Heart right ventricle (tissue), 16 donors: ENCODE measurements at regions of chr4 and their contacts with region 1.

Region 1: DNA sequence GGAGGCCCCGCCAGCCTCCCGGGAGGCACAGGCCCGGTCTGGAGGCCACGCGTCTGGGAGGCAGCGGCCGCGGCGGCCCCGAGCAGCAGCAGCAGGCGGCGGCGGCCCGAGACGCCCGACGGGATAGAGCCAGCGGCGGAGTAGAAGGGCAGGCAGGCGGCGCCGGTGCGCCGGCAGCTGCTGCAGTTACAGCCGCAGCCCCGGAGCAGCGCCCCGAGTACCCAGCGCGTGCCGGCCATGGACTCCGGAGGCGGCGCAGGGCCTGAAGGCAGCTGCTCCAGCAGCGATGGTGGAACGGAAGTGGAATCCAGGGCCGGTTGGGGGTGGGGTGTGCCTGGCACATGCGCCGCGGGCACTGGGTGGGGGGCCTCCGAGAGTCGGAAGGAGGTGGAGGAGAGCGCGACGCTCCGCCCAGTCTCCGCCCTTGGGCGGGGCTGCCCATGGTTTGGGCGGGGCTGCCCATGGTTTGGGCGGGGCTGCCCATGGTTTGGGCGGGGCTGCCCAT is at the start of gene GRSF1:
- DNase-seq: peak; percentile 94 to 96
- ATAC-seq: peak; percentile 96 to 98 (median 97)
- H3K4me3 ChIP-seq: peak within 1 kb of the TSS; percentile 59 to 95 (median 88)
- H3K27ac ChIP-seq: peak within 1 kb of the TSS; percentile 81 to 99 (median 96)
- H3K4me1 ChIP-seq: peaks cover 3 to 32% (median 27%) of the 10 kb centered on the region in 9 donors
- H3K27me3 ChIP-seq: no peaks in the 10 kb centered on the region
- CTCF ChIP-seq: peak in 5 of 9 donors; percentile 17 to 48 (median 36)
- total RNA-seq, gene GRSF1: 85.1 to 131 (median 101) TPM

Region 2: GRCh38 chr4:70603856-70604255 is 235.8 kb before region 1 on chr4:
- intact Hi-C with region 1: no loop called
- DNase-seq: no peak
- ATAC-seq: no peak
- H3K4me3 ChIP-seq: no peak overlapping the region
- H3K27ac ChIP-seq: no peak overlapping the region
- H3K4me1 ChIP-seq: no peaks in the 10 kb centered on the region
- H3K27me3 ChIP-seq: peaks cover 0 to 8% (median 0%) of the 10 kb centered on the region in 7 donors
- CTCF ChIP-seq: no peak

Region 3: GRCh38 chr4:70687821-70688794 is 151.5 kb before region 1 on chr4 and contains the start of gene UTP3:
- intact Hi-C with region 1: loop called in 2 of 10 experiments (anchors 2 to 10 kb)
- DNase-seq: peak; percentile 95 to 97
- ATAC-seq: peak; percentile 97 to 99 (median 98)
- H3K4me3 ChIP-seq: peak within 1 kb of the TSS; percentile 65 to 96 (median 92)
- H3K27ac ChIP-seq: peak within 1 kb of the TSS; percentile 78 to 98 (median 94)
- H3K4me1 ChIP-seq: peaks cover 8 to 50% (median 33%) of the 10 kb centered on the region in 9 donors
- H3K27me3 ChIP-seq: no peaks in the 10 kb centered on the region
- CTCF ChIP-seq: peak; percentile 93 to 99 (median 98)
- total RNA-seq, gene UTP3: 13.9 to 20.4 (median 18.5) TPM

Region 4: DNA sequence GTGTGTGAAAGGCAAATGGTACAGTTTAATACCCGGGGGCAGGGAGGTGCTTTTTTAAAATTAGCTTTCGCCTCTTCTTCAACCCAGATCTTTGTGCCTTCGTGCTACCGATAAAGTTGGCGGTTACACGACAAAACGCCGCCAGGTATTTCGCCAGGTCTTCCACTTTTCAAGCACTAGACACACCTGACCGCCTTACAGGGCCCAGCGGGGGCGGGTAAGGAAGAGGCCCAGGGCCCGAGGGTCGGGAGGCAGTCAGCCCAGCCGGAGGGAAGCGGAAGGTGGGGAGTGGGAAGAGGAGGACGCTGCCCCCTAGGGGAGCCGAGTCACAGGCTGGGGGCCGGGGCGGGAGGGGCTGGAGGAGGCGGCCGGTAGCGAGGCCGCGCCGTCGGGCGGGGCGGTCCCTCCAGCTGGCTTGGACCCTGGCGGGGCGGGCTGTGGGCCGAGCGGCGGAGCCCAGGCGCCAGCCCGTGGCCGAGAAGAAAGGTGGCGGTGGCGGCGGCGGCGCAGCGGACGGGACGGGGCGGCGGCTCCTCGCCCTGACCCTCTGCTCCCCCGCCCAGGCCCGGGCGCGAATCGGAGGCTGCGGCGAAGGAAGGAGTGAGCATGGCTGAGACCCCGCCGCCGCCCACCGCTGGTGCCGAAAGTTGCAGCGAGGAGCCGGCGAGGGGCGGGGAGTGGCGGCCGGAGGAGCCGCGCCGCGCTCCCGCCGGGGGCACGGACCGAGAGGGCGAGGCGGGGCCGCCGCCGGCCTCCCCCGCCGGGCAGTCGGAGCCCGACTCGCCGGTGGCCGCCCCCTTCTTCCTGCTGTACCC is 135.1 kb before region 1 on chr4:
- intact Hi-C with region 1: loop called in 3 of 10 experiments (anchors 10 kb)
- DNase-seq: peak; percentile 86 to 87
- ATAC-seq: peak; percentile 87 to 93 (median 90)
- H3K4me3 ChIP-seq: peak overlapping the region; percentile 59 to 96 (median 84)
- H3K27ac ChIP-seq: peak overlapping the region; percentile 77 to 99 (median 97)
- H3K4me1 ChIP-seq: peaks cover 3 to 33% (median 17%) of the 10 kb centered on the region in 9 donors
- H3K27me3 ChIP-seq: no peaks in the 10 kb centered on the region
- CTCF ChIP-seq: peak in 8 of 9 donors; percentile 8 to 66 (median 38)

Region 5: DNA sequence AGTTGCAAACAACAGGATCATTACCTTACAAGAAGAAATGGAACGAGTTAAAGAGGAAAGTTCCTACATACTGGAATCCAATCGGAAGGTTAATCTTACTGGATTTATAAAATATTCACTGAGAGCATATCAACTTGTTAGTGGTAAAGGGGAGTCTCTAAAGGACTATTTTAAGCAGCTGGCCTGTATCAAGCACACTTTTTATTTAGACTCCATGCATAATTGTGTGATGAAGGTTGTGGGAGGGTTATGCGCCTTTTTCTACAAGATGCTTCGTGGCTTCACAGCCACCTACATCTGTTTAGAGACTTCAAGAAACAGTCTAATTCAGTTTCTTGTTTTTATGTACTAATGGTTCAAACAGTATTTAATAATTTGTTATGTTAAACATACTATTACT is 56.5 kb before region 1 on chr4:
- intact Hi-C with region 1: loop called in 1 of 10 experiments (anchors 10 kb)
- DNase-seq: no peak
- ATAC-seq: no peak
- H3K4me3 ChIP-seq: no peak overlapping the region
- H3K27ac ChIP-seq: no peak overlapping the region
- H3K4me1 ChIP-seq: peaks cover 0 to 13% (median 0%) of the 10 kb centered on the region in 9 donors
- H3K27me3 ChIP-seq: no peaks in the 10 kb centered on the region
- CTCF ChIP-seq: no peak

Region 6: DNA sequence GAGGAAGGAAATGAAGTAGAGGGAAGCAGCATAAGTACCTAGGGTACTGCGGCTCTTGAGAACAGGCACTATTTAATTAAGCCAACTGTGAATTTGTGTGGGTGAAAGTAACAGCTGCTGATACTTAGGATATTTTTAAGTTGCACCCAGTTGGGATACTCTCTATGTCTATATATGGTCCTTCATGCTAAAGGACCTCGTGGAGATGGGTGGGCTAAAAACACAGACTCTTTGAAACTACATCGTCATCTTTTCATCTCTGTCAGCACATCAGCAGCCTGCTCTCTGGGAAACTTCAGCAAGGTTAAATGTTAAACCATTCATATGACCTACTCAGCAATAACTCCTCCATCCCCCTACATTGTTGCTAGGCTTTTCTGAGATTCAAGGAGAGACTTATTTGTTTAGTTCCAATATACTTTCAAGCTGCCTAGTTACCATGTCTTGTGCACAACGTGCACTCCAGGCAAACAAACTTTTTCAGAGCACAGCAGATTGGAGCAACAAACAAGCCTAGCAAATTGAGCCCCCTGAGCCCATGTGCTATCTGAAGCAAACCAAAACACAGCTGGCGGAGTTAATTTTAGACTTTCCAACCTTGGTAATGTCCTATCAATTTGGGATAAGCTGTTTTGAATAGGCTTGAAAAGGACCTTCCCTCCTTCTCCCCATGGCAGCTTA is 56.3 kb after region 1 on chr4:
- intact Hi-C with region 1: loop called in 5 of 10 experiments (anchors 2 to 5 kb)
- DNase-seq: peak in 1 of 2 donors; percentile 23
- ATAC-seq: peak; percentile 32 to 78 (median 62)
- H3K4me3 ChIP-seq: no peak overlapping the region
- H3K27ac ChIP-seq: peak overlapping the region in 9 of 10 donors; percentile 31 to 80 (median 55)
- H3K4me1 ChIP-seq: peaks cover 0 to 25% (median 14%) of the 10 kb centered on the region in 9 donors
- H3K27me3 ChIP-seq: no peaks in the 10 kb centered on the region
- CTCF ChIP-seq: no peak

Region 7: GRCh38 chr4:70901984-70902576 is 62.4 kb after region 1 on chr4 and contains the start of gene MOB1B:
- intact Hi-C with region 1: loop called in 7 of 10 experiments (anchors 2 to 5 kb)
- DNase-seq: peak; percentile 87 to 93
- ATAC-seq: peak; percentile 96 to 98 (median 97)
- H3K4me3 ChIP-seq: peak within 1 kb of the TSS; percentile 74 to 99 (median 91)
- H3K27ac ChIP-seq: peak within 1 kb of the TSS; percentile 77 to 93 (median 89)
- H3K4me1 ChIP-seq: peaks cover 0 to 21% (median 10%) of the 10 kb centered on the region in 9 donors
- H3K27me3 ChIP-seq: no peaks in the 10 kb centered on the region
- CTCF ChIP-seq: peak; percentile 15 to 63 (median 46)
- total RNA-seq, gene MOB1B: 15.6 to 33.4 (median 20.3) TPM

Region 8: GRCh38 chr4:70915036-70915815 is 75.6 kb after region 1 on chr4:
- intact Hi-C with region 1: no loop called
- DNase-seq: no peak
- ATAC-seq: no peak
- H3K4me3 ChIP-seq: no peak overlapping the region
- H3K27ac ChIP-seq: no peak overlapping the region
- H3K4me1 ChIP-seq: peaks cover 0 to 17% (median 9%) of the 10 kb centered on the region in 9 donors
- H3K27me3 ChIP-seq: no peaks in the 10 kb centered on the region
- CTCF ChIP-seq: no peak

Region 9: GRCh38 chr4:70993181-70994068 is 153.8 kb after region 1 on chr4 and contains the start of gene DCK:
- intact Hi-C with region 1: loop called in 9 of 10 experiments (anchors 2 to 10 kb)
- DNase-seq: peak; percentile 90 to 94
- ATAC-seq: peak; percentile 98 to 100 (median 99)
- H3K4me3 ChIP-seq: peak within 1 kb of the TSS; percentile 66 to 90 (median 80)
- H3K27ac ChIP-seq: peak within 1 kb of the TSS; percentile 49 to 93 (median 86)
- H3K4me1 ChIP-seq: peaks cover 0 to 54% (median 23%) of the 10 kb centered on the region in 9 donors
- H3K27me3 ChIP-seq: no peaks in the 10 kb centered on the region
- CTCF ChIP-seq: peak in 3 of 9 donors; percentile 7 to 18 (median 12)
- total RNA-seq, gene DCK: 4.7 to 9.3 (median 6.5) TPM

Region 10: DNA sequence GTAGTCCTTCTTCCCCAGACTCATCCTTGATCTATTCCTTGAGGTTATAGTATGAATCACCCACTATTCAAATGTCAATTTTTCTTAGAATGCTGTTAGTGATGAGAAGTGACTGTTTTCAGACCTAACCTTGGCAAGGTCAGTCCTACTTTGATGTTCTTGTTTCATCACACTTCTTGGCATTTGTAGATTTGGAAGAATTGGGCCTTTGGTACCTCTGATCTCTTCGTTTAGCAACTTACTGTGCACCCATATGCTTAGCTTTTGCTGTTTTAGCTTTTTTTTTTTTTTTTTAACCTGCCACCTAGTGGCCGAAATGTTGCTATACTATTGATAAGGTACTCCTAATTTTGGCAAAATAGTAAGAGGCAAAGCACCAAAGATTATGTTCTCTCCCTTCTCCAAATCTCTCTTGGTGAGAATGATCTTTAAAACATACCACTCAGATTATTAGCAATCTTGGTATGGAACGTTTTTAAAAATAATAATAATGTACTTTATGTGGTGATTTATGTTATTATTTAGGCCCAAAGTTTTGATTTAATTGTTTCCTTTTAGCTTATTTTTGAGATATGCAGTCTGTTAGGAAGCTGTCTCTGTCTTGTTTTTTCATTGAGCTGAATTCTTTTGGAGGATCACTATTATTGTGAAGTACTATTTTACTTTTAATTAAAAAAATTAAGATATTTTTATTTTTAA is 170.4 kb after region 1 on chr4:
- intact Hi-C with region 1: no loop called
- DNase-seq: no peak
- ATAC-seq: peak in 4 of 8 donors; percentile 46 to 57 (median 50)
- H3K4me3 ChIP-seq: no peak overlapping the region
- H3K27ac ChIP-seq: no peak overlapping the region
- H3K4me1 ChIP-seq: peaks cover 0 to 23% (median 0%) of the 10 kb centered on the region in 9 donors
- H3K27me3 ChIP-seq: no peaks in the 10 kb centered on the region
- CTCF ChIP-seq: peak; percentile 47 to 78 (median 67)